ENCODE measurements at regions of chr16 and their contacts with region 1.

Region 1: DNA sequence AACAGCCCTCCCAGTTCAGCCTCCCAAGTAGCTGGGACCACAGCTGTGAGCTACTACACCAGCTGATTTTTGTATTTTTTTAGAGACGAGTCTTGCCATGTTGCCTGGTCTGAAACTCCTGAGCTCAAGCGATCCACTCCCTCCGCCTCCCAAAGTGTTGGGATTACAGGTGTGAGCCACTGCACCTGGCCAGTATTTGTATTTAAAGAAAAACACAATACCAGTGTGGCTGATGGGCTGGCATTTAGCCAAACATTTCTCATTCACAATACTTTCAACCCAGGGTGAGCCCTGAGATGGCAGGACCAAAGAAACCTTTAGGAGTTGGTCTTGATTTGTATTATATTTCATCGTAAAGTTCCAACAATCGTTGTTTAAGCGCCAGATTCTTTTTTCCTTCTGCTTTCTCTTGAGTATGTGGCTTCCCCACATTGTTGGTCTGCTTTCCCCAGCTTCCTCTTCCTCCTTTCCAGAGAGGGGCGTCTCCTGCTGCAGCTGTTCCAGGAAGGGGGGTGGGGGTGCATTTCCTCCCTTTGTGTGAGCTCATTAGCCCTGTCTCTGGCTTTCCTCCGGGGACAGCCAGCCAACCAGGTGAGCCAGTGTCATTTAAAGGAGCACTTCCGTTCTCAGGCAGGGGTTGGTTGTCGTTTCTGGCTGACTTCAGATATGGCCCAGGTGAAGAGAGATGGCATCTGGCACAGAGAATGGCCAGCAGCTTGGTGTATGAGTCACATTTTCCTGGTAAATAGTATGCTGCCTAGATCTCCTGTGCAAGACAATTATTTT is 79.9 kb downstream of the GPRC5B start:
- DNase-seq: peak; percentile 84
- ATAC-seq: peak; percentile 57

Region 2: DNA sequence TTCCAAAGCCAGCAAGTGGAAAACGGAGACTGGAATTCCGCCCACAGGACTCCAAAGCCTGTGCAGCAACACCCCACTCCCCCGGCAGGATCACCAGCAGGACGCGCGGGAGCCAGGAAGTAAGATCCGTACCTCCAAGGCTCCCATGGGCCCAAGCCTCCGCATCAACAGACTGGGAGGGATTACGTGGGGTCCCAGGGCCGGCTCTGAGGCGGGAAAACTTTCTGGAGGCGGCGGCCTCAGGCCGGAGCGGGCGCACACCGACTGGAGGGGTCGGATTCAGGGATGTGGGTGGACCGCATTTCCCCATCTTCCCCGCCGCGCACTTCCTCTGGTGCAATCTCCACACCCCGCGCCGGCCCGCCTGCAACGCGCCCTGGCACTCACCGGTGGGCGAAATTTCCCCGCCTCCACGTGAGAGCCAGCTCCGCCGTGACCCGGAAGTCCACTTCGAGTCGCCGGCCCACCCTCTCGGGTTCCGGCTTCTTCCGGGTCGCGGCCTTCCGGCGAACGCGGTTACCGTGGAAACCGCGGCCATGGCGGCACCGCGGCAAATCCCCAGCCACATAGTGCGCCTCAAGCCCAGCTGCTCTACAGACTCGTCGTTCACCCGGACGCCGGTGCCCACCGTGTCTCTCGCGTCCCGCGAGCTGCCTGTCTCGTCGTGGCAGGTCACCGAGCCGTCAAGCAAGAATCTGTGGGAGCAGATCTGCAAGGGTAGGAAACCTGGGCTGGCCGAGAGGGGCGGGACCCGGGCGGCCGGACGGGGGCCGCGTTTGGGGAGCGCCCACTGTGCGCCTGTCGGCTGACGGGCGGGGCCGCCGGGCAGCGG is 86.7 kb before region 1 on chr16 and contains the starts of genes IQCK and KNOP1:
- intact Hi-C with region 1: loop called (anchors 10 kb)
- DNase-seq: peak; percentile 95
- ATAC-seq: peak; percentile 95
- total RNA-seq, gene IQCK: 5.2 TPM
- total RNA-seq, gene KNOP1: 8.4 TPM

Region 3: GRCh38 chr16:19760356-19761060 is 44.2 kb before region 1 on chr16:
- intact Hi-C with region 1: loop called (anchors 5 kb)
- DNase-seq: no peak
- ATAC-seq: no peak